Mammary epithelial cell (primary cell): ENCODE measurements at regions of chr22 and their contacts with region 1.

Region 1: GRCh38 chr22:46057762-46058420 is 80.9 kb upstream of the WNT7B start:
- DNase-seq: peak; percentile 86
- H3K4me3 ChIP-seq: peak overlapping the region; percentile 4 to 72 (median 59)
- H3K27ac ChIP-seq: peak overlapping the region; percentile 87
- H3K4me1 ChIP-seq: peaks cover 66% of the 10 kb centered on the region
- H3K27me3 ChIP-seq: no peaks in the 10 kb centered on the region
- CTCF ChIP-seq: no peak

Region 2: GRCh38 chr22:46044621-46045438 is 13.1 kb before region 1 on chr22:
- CTCF ChIA-PET with region 1: no interaction called
- dilution Hi-C with region 1: no loop called
- in situ Hi-C with region 1: no loop called
- intact Hi-C with region 1: loop called (anchors 2 kb)
- DNase-seq: peak; percentile 35
- H3K4me3 ChIP-seq: peak overlapping the region; percentile 35 to 38 (median 37)
- H3K27ac ChIP-seq: peak overlapping the region; percentile 54
- H3K4me1 ChIP-seq: peaks cover 30% of the 10 kb centered on the region
- H3K27me3 ChIP-seq: no peaks in the 10 kb centered on the region
- CTCF ChIP-seq: no peak

Region 3: GRCh38 chr22:46108564-46109473 is 50.9 kb after region 1 on chr22:
- CTCF ChIA-PET with region 1: no interaction called
- dilution Hi-C with region 1: loop called (anchors 5 kb)
- in situ Hi-C with region 1: loop called in 1 of 2 experiments (anchors 5 kb)
- intact Hi-C with region 1: no loop called
- DNase-seq: peak; percentile 58
- H3K4me3 ChIP-seq: no peak overlapping the region
- H3K27ac ChIP-seq: no peak overlapping the region
- H3K4me1 ChIP-seq: peaks cover 87% of the 10 kb centered on the region
- H3K27me3 ChIP-seq: no peaks in the 10 kb centered on the region
- CTCF ChIP-seq: peak in 1 of 2 donors; percentile 8